Activated naive CD4-positive, alpha-beta T cell treated with anti-CD3 and anti-CD28 coated beads for 36 hours (primary cell): ENCODE measurements at regions of chr16 and their contacts with region 1.

Region 1: DNA sequence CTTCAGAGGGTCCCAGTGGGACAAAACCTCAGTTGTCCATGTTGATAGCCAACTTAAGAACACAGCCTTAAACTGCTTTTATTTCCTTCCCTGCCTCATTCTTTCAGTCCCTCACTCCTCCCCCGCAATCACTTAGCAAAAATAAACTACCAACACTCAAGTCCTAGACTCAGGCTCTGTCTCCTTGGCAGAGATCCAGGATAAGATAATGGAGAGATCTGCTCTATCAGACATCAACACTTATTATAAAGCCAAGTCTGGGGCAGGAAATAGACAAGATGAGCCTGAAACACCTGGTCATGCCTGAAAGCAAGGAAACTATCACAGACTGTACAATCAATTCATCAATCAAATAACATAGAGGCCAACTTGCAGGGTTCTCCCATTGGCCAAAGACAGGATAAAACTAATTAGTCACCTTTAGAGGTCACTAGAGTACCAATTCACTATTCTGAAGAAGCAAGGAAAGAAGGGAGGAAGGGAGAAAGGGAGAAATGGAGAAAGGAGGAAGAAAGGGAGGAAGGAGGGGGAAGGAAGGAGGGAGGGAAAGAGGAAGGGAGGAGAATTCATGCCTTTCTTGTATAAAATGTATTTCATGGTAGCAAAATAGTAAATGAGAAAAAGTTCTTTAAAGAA is 15.7 kb downstream of the HYDIN start:
- DNase-seq: no peak
- H3K4me3 Mint-ChIP-seq: no peak overlapping the region
- H3K27ac Mint-ChIP-seq: no peak overlapping the region
- H3K4me1 Mint-ChIP-seq: no peaks in the 10 kb centered on the region
- H3K27me3 Mint-ChIP-seq: peaks cover 15% of the 10 kb centered on the region

Region 2: DNA sequence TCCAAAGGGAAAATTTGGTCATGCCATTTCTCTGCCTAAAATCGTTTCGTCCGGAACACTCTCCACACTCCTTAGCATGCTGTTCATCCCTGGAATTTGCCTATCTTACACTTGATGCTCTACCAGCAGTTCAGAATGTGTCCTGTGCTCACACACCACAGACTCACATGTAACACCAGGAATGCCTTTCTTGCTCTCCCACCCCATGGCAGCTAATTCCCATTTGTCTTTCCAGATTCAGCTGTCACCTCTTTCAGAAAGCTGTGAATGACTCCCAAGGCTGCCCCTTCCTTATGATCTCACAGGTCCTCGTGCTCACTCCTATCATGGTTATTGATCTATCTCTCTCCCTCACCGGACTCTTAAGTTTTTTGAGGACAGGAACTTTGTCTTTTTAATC is 22.5 kb before region 1 on chr16:
- CTCF ChIA-PET with region 1: no interaction called
- intact Hi-C with region 1: no loop called
- DNase-seq: no peak
- H3K4me3 Mint-ChIP-seq: no peak overlapping the region
- H3K27ac Mint-ChIP-seq: no peak overlapping the region
- H3K4me1 Mint-ChIP-seq: no peaks in the 10 kb centered on the region
- H3K27me3 Mint-ChIP-seq: peaks cover 10% of the 10 kb centered on the region

Region 3: DNA sequence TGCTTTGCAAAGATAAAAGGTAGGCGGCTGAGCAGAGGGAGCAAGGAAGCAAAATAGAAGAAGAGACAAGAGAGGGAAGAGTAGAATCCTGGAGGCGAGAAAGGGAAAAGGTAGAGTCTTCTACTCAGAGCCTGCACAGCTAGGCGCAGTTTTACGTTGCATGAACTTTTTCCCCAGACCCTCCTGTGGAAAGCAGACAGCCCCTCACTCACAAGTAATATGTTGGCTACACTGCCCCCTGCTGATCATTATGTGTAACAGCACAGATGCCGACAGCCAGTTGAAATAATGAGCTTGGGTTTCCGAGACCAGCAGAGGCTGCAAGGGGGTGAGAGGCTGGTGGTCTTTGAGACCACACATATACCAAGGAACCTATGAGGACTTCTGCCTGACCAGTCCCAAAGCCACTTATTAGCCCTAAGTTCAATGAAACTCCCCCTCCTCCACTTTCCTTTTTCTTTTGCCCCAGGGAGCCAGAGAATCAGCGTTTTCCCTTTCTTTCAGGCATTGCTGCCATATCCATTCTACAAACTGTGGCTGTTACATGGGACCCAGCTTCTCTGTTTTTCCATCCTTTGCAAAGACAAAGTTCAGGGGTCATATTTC is 96.8 kb after region 1 on chr16:
- CTCF ChIA-PET with region 1: interaction called, 5 read pairs
- intact Hi-C with region 1: loop called (anchors 2 kb)
- DNase-seq: peak; percentile 37
- H3K4me3 Mint-ChIP-seq: no peak overlapping the region
- H3K27ac Mint-ChIP-seq: no peak overlapping the region
- H3K4me1 Mint-ChIP-seq: no peaks in the 10 kb centered on the region
- H3K27me3 Mint-ChIP-seq: peaks cover 25% of the 10 kb centered on the region

Region 4: DNA sequence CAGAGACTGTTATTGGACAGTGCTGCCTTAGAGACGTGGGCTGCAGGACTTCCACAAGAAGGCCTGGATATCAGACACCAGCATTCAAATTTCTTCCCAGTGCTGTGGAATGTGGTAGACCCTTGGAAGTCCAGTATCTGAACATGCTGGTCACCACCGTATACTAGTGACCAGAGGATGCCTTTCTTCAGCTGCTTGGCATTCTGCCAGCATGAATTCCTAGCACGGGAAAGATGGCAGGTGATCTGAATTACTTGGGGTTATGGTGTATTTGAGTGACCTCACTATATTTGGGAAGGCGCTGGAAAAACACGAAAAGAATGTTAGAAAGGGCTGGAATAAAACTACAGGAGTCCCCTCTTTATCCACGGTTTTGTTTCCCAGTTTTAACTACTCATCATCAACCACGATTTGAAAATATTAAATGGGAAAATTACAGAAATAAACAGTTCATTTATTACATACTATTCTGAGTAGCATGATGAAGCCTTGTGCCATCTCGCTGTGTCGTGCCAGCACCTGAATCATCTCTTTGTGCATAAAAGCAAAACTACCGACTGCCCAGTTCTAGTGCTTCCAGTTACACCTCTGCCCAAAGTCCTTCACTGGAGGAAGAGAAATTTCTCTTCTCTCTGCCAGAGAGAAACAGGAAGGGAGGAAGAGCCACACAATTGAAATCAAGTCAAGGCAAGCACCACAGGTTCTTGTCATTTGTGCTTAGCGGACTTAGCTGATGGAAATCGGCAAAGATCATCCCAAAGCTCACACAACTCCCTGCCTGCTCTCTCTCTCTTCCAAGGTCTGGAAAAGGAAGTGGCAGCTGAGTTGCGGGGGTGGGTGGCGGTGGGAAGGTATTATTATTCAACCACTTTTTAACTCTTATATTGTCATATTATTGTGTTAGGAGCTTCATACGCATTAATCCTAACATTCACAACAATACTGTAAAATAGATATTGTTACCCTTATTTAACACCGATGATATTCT is 310.0 kb after region 1 on chr16:
- CTCF ChIA-PET with region 1: no interaction called
- intact Hi-C with region 1: no loop called
- DNase-seq: no peak
- H3K4me3 Mint-ChIP-seq: no peak overlapping the region
- H3K27ac Mint-ChIP-seq: no peak overlapping the region
- H3K4me1 Mint-ChIP-seq: no peaks in the 10 kb centered on the region
- H3K27me3 Mint-ChIP-seq: peaks cover 20% of the 10 kb centered on the region